ENCODE measurements at regions of chr15 and their contacts with region 1.

Region 1: GRCh38 chr15:83657549-83657948 is 3.6 kb downstream of the ADAMTSL3 start:
- H3K4me3 ChIP-seq: no peak overlapping the region
- H3K27ac ChIP-seq: no peak overlapping the region
- H3K4me1 ChIP-seq: peaks cover 3% of the 10 kb centered on the region; the same call in 1 of the 2 replicates
- CTCF ChIP-seq: peak; percentile 22; the same call in 1 of the 2 replicates

Region 2: DNA sequence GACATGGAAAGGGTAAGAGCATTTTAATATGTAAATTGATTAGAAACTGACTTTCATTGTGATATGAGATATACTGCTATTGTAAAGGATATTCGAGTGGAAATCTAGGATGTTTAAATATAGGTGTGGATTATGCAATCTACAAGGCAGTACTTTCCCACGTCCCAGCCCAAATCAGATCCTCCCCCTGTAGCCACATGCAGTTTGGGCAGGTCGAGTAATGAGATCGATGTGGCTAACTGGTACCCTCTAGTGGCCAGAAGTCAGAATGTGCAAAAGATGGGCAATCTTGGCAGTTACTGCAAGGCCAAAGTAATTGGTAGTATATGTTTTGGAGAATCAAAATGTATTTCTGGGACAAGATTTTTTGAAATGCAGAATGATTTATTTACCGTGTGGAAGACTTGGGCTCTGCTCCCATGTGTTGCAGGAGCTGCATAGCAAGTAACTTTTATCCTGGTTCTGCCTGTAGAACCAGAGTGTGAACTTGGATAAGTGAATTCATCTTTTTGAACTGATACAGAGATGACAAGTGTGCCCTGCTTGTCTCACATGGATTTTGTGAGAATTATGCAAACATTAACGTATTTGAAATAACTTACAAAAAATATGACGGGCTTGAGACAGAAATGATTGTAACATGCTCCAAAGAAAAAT is 98.1 kb before region 1 on chr15:
- CTCF ChIA-PET with region 1: interaction called, 10 read pairs
- POLR2A ChIA-PET with region 1: no interaction called
- H3K4me3 ChIP-seq: no peak overlapping the region
- H3K27ac ChIP-seq: no peak overlapping the region
- H3K4me1 ChIP-seq: no peaks in the 10 kb centered on the region
- CTCF ChIP-seq: peak; percentile 69; the same call in 1 of the 2 replicates

Region 3: DNA sequence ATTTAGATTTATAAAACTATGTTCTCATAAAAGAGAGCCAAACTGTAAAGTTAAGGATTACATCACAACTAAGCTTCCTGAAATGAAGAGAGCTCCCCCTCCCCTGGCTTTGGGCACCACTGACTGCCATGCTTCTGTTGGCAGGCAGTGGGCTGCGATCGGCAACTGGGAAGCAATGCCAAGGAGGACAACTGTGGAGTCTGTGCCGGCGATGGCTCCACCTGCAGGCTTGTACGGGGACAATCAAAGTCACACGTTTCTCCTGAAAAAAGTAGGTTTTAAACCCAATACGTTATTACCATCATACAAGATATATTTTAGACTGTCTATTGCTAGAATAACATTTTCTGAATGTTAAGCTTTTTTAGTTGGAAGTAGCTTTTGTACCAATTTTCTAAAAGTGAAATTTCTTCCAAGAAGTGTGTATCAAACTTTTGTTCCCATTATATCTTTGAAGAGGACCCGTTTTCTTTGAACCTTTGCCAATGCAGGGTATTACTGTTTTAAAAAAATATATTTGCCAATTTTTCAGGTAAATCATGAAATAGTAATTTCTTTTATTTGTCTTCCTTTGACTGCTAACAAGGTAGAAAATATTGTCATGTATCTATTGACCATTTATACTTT is 180.5 kb after region 1 on chr15:
- CTCF ChIA-PET with region 1: interaction called, 11 read pairs
- POLR2A ChIA-PET with region 1: no interaction called
- H3K4me3 ChIP-seq: no peak overlapping the region
- H3K27ac ChIP-seq: no peak overlapping the region
- H3K4me1 ChIP-seq: no peaks in the 10 kb centered on the region
- CTCF ChIP-seq: peak; percentile 28; the same call in 1 of the 2 replicates

Measured in HEK293 (cell line).